ENCODE measurements at regions of chr14 and their contacts with region 1.

Region 1: DNA sequence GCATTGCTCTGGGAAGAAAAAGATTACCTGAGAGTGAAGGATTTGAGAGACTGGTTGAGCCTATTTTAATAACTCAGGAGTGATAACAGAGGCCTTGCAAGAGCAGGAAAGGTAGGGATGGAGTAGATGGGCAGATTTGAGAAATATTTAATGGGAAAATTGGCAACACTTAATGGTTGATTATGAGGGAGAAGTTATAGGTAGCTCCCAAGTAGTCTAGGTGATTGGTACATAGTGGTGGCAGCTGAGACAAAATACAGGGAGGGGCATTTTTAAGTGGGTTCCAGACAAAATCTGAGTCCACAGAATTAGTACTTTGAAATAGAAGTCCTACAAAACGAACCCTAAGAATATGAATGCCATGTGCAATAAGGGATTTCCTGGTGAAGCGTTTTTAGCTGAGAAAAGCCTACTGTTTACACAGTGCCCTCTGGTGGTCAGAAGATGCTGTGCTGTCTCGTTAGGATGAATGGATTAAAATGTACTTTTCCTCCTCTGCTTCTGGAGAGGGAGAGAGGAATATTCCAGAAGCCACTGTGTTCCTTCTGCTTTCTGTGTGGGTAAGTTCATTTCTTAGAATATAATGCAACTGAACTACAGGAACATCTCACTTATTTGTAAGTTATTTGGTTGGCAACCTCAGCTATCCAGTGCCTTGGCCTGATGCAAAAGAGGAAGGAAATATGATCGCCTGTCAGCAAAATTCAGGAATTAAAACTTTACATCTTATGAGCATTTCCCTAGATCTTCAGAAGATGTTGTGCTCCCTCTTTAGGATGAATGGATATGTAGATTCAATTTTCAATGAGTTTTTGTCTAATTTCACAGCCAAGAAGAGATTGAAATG is 6.5 kb downstream of the ZBTB1 start:
- DNase-seq: peak; percentile 69
- H3K4me3 Mint-ChIP-seq: peak overlapping the region; percentile 52
- H3K27ac Mint-ChIP-seq: peak overlapping the region; percentile 58
- H3K4me1 Mint-ChIP-seq: peaks cover 69% of the 10 kb centered on the region
- H3K27me3 Mint-ChIP-seq: no peaks in the 10 kb centered on the region

Region 2: DNA sequence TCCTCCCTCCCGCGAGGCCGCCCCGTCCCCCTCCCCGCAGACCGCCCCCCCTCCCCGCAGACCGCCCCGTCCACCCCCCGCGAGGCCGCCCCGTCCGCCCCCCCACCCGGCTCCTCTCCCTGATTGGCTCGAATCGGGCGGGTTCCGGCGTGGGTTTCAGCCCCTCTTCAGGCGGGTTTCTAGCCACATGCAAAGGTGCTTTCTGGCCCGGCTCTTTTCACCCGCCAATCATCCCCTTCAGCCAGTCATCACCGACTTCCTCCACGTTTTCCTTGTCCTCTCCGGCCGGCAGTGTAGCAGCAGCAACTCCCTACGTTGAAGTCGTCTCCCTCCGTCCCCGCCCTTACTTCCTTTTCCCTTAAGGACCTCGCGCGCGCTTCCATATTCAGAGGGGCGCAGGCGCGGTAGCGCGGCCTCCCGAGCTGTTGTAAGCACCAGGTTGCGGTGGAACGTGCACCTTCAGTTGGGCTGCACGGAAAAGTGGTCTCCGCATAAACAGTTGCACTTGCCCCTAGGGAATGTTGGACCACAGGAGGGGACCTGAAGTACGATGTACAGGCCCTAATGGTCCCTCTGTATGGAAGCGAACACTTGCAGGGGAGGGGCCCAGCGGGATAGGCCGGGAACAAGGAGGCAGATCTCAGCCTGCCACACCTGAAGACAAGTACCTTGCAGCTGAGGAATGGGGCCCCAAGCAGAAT is 172.3 kb before region 1 on chr14:
- CTCF ChIA-PET with region 1: interaction called, 18 read pairs
- POLR2A ChIA-PET with region 1: interaction called, 28 read pairs
- DNase-seq: peak; percentile 91
- H3K4me3 Mint-ChIP-seq: peak overlapping the region; percentile 77
- H3K27ac Mint-ChIP-seq: peak overlapping the region; percentile 80
- H3K4me1 Mint-ChIP-seq: peaks cover 33% of the 10 kb centered on the region
- H3K27me3 Mint-ChIP-seq: no peaks in the 10 kb centered on the region

Region 3: DNA sequence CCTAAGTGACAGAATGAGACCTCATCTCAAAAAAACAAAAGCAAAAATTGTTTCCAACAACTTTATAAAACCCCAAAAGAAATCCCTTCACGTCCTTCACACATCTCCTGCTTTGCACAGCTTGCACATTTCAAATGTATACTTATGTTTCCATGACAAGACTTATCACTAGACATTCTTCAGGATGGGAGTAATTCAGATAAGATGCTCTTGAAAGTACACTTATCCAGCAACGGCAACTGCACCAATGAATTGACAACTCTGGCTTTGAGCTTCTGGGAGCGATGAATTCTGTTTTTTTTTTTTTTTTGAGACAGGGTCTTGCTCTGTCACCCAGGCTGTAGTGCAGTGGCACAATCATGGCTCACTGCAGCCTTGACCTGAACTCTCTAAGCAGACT is 76.5 kb before region 1 on chr14:
- CTCF ChIA-PET with region 1: interaction called, 19 read pairs
- POLR2A ChIA-PET with region 1: no interaction called
- DNase-seq: no peak
- H3K4me3 Mint-ChIP-seq: no peak overlapping the region
- H3K27ac Mint-ChIP-seq: no peak overlapping the region
- H3K4me1 Mint-ChIP-seq: peaks cover 18% of the 10 kb centered on the region
- H3K27me3 Mint-ChIP-seq: no peaks in the 10 kb centered on the region

Region 4: DNA sequence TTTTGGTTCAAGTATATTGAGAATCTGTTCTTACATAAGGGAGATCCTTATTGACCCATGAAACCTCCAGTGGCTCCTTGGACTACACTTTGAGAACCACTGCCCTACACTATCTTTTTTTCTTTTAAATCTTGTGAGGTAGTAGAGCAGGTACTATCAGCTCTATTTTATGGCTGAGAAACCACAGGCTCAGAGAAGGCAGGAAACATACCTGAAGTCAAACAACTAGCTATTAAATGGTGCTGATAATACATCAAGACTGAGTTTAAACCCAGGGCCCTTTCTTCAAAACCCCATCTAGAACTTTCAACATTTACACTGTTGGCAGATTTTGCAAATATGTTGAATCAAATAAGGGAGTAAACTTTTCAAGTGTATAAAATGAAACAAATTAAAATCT is 14.3 kb before region 1 on chr14:
- CTCF ChIA-PET with region 1: interaction called, 21 read pairs
- POLR2A ChIA-PET with region 1: interaction called, 49 read pairs
- DNase-seq: no peak
- H3K4me3 Mint-ChIP-seq: no peak overlapping the region
- H3K27ac Mint-ChIP-seq: no peak overlapping the region
- H3K4me1 Mint-ChIP-seq: peaks cover 50% of the 10 kb centered on the region
- H3K27me3 Mint-ChIP-seq: no peaks in the 10 kb centered on the region

Region 5: DNA sequence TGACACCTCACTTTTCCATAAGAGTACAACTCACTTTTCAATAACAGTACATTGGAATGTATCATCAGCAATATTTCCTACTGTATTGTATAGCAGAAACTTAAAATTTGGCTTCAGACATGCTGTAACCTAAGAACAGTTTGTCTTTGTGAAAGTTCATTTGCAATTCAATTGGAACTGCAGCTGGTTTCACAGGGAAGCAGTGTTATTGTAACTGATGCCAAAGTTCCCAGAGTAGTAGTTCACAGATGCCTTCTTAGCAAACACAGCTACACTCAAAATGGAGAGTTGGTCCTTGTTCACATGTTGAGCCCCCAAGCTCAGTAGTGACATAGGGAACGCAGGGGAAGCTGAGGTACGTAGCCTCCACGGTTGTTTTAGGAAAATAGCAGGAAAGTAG is 62.1 kb after region 1 on chr14:
- CTCF ChIA-PET with region 1: no interaction called
- POLR2A ChIA-PET with region 1: no interaction called
- DNase-seq: no peak
- H3K4me3 Mint-ChIP-seq: no peak overlapping the region
- H3K27ac Mint-ChIP-seq: no peak overlapping the region
- H3K4me1 Mint-ChIP-seq: peaks cover 3% of the 10 kb centered on the region
- H3K27me3 Mint-ChIP-seq: peaks cover 3% of the 10 kb centered on the region